Right ventricle myocardium inferior (tissue), 1 donor: ENCODE measurements at regions of chr6 and their contacts with region 1.

Region 1: GRCh38 chr6:40999569-40999968 is 39.5 kb downstream of the UNC5CL start:
- DNase-seq: peak; percentile 68
- ATAC-seq: peak; percentile 75

Region 2: DNA sequence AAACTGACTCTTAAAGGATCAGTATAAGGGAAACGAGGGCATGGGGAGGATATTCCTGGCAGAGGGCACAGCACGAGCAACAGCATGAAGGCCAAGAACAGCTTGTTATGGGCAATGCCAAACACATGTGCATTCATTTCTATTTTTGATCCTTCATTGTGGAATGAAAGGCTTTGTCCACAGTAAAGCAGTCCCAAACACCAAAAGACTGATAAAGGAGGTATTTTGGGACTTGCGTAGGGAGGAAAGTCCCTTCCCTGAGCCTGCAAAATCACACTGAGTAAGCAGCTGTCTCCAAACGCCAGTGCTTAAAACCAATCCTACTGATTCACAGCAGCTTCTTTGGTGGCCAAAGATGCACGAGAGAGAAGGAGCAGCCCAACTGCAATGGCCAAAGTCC is 98.8 kb before region 1 on chr6:
- intact Hi-C with region 1: loop called (anchors 1 kb)
- DNase-seq: no peak
- ATAC-seq: peak; percentile 84